Heart right ventricle (tissue), 16 donors: ENCODE measurements at regions of chr17 and their contacts with region 1.

Region 1: DNA sequence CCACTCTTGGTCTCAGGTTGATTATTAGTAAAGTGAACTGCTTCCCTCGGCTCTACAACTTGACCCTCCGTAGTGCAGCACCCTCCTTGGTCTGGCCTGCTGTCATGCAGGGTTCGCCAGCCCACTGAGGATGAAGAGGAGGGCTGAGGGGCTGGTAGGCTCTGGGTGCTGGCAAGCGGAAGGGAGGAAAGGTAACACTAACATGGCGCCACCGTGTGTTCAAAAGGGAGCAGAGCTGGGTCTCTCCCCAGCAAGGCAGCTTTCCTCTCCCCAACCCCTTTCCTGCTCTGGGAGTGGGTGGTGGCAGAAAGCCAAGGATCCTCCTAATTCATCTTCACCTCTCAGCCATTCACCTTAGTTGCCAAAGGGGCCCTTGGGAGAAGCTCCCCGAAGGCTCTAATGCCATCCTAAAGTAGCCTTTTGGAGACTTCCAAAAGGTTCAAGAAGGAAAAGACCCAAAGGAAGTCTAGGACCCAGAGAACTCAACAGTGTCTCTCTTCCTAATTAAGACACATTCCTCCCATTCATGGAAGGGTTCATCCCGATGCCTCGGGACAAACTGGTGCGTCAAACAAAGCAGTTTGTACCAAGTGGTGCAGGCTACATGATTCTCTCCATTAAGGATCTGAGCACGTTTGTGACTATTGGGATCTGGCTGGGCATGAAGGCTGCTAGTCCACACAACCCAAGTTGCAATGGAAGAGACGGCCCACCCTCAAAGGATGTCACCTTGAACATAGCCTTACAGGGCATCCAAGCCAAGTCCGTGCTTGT is 90.8 kb upstream of the TOB1 start:
- DNase-seq: peak; percentile 66 to 67
- ATAC-seq: peak; percentile 56 to 73 (median 68)
- H3K4me3 ChIP-seq: no peak overlapping the region
- H3K27ac ChIP-seq: peak overlapping the region in 6 of 10 donors; percentile 9 to 86 (median 76)
- H3K4me1 ChIP-seq: peaks cover 3 to 41% (median 31%) of the 10 kb centered on the region in 9 donors
- H3K27me3 ChIP-seq: no peaks in the 10 kb centered on the region
- CTCF ChIP-seq: peak; percentile 44 to 80 (median 77)

Region 2: DNA sequence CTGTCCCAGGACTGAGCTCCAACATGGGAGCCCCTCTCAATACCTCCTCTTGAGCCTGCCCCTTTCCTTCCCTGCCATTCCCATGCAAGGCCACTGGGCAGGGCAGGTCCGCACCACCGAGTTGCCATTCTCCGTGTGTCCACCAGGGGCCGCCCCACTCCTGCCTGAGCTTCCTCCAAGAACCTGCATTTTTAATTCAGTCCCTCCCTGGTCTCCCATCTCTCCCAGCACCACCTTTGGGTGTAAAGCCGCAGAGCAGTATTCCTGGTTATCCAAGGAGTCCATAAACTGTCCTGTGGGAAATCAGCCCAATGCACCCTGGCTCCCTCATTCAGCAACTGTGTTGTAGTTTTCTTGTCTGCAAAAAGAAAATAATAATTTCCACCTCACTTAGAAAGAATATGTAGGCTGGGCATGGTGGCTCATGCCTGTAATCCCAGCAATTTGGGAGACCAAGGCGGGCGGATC is 173.7 kb before region 1 on chr17:
- intact Hi-C with region 1: loop called in 9 of 10 experiments (anchors 2 to 10 kb)
- DNase-seq: peak; percentile 86
- ATAC-seq: peak; percentile 82 to 91 (median 84)
- H3K4me3 ChIP-seq: no peak overlapping the region
- H3K27ac ChIP-seq: no peak overlapping the region
- H3K4me1 ChIP-seq: peaks cover 0 to 25% (median 3%) of the 10 kb centered on the region in 9 donors
- H3K27me3 ChIP-seq: peaks cover 0 to 4% (median 0%) of the 10 kb centered on the region in 7 donors
- CTCF ChIP-seq: peak; percentile 94 to 98 (median 96)

Region 3: GRCh38 chr17:50848039-50848438 is 108.9 kb before region 1 on chr17:
- intact Hi-C with region 1: loop called in 8 of 10 experiments (anchors 1 to 5 kb)
- DNase-seq: no peak
- ATAC-seq: no peak
- H3K4me3 ChIP-seq: no peak overlapping the region
- H3K27ac ChIP-seq: peak overlapping the region in 1 of 10 donors; percentile 40
- H3K4me1 ChIP-seq: peaks cover 0 to 54% (median 16%) of the 10 kb centered on the region in 9 donors
- H3K27me3 ChIP-seq: no peaks in the 10 kb centered on the region
- CTCF ChIP-seq: peak in 7 of 9 donors; percentile 20 to 52 (median 35)

Region 4: GRCh38 chr17:50853015-50853615 is 103.8 kb before region 1 on chr17:
- intact Hi-C with region 1: loop called in 8 of 10 experiments (anchors 1 to 5 kb)
- DNase-seq: no peak
- ATAC-seq: peak in 1 of 8 donors; percentile 2
- H3K4me3 ChIP-seq: peak overlapping the region in 1 of 10 donors; percentile 47
- H3K27ac ChIP-seq: peak overlapping the region in 8 of 10 donors; percentile 39 to 92 (median 82)
- H3K4me1 ChIP-seq: peaks cover 0 to 46% (median 18%) of the 10 kb centered on the region in 9 donors
- H3K27me3 ChIP-seq: no peaks in the 10 kb centered on the region
- CTCF ChIP-seq: no peak